Lower lobe of right lung (tissue), 2 donors: ENCODE measurements at regions of chr12 and their contacts with region 1.

Region 1: DNA sequence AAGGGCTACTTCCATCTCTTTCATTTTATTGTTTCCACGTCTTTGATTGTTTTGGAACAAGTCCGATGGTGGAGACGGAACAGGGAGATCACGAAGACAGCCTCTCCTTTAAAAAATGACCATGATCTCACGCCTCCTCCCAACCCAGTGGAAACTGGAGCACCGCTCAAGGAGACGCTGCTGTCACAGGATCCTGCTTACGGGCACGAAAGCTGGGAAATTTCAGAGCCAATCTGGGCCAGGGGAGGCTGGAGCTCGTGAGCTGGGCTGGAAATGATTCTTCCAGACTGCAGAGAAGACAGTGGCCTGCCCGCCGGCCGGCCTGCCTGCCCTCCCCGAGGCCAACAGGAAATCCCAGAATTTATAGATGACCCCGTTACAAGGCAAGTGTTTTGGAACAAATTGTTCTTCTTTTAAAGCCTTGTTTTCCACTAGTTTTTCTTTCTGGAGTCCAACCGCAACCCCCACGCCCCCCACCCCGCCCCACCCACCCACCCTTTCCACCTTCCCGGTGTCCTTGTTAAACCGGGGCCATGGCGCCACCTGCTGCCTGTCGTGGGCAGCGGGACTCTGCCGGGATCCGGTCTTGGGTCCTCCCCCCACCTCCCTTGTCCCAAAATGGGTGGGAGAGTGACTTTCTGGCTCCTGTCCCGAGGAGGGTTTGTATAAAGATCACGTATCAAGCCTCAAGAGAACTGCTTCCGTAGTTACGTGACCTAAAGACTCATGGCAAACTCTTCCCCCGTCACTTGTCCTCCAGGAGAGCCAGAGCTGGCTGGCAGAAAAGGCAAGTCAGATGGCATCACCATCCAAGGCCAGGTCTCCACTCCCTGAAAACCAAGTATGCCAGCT is 40.3 kb downstream of the MAP1LC3B2 start:
- DNase-seq: peak; percentile 86
- ATAC-seq: peak; percentile 90 to 93
- H3K4me3 ChIP-seq: peak overlapping the region; percentile 43
- H3K27ac ChIP-seq: peak overlapping the region; percentile 81
- H3K4me1 ChIP-seq: peaks cover 26% of the 10 kb centered on the region
- H3K27me3 ChIP-seq: no peaks in the 10 kb centered on the region
- CTCF ChIP-seq: peak; percentile 64

Region 2: GRCh38 chr12:116426391-116427136 is 172.9 kb before region 1 on chr12:
- intact Hi-C with region 1: no loop called
- DNase-seq: no peak
- ATAC-seq: peak; percentile 35 to 41
- H3K4me3 ChIP-seq: no peak overlapping the region
- H3K27ac ChIP-seq: no peak overlapping the region
- H3K4me1 ChIP-seq: no peaks in the 10 kb centered on the region
- H3K27me3 ChIP-seq: no peaks in the 10 kb centered on the region
- CTCF ChIP-seq: peak; percentile 8

Region 3: DNA sequence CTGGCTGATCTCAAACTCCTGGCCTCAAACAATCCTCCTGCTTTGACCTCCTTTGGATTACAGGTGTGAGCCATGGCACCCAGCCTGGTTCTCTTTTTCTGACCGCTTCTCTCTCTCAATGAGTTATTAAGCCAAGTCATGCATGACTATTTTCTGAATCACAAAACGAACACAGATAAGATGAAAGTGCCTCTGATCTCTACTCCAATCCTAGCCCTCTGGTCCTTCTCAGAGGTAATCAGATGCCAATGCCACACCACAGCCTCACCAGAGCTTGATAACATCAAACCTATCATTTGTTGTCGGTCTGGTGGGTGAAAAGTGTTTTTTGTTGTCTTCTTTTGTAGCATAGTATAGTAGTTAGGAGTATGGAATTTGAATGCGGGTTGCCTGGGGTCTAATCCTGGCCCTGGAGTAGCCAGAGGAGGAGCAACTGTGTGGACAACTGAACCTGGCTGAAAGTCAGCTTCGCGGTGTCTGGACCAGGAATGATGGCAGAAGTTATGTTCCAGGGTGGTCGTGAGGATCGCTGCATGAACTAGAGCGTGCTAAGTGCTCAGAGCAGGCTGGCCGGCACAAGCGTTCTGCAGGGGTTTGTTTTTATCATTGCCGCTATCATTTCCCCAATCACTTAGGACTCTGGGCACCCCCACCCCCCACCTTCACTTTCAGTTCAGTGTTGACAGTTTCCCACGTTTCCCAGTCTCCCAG is 60.4 kb after region 1 on chr12:
- intact Hi-C with region 1: loop called (anchors 10 kb)
- DNase-seq: no peak
- ATAC-seq: peak in 1 of 2 donors; percentile 7
- H3K4me3 ChIP-seq: no peak overlapping the region
- H3K27ac ChIP-seq: no peak overlapping the region
- H3K4me1 ChIP-seq: peaks cover 27% of the 10 kb centered on the region
- H3K27me3 ChIP-seq: no peaks in the 10 kb centered on the region
- CTCF ChIP-seq: no peak

Region 4: DNA sequence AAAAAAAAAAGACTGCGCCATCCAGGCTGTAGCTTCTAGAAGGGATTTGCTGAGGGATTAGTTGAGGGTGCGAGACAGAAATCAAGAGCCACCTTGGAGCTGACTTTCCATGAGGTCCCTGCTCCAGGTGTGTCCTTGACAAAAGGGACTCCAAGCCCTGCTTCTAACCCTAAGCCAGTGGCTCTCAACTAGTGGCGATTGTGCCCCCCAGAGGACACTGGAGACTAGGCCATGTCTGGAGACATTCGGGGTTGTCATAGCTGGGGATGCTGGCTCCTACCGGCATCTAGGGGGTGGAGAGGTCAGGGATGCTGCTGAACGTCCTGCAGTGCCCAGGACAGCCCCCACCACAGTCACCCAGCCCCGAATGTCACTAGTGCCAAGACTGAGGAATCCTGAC is 97.8 kb after region 1 on chr12:
- intact Hi-C with region 1: no loop called
- DNase-seq: no peak
- ATAC-seq: peak; percentile 33 to 48
- H3K4me3 ChIP-seq: no peak overlapping the region
- H3K27ac ChIP-seq: no peak overlapping the region
- H3K4me1 ChIP-seq: peaks cover 37% of the 10 kb centered on the region
- H3K27me3 ChIP-seq: peaks cover 16% of the 10 kb centered on the region
- CTCF ChIP-seq: peak; percentile 30